ENCODE measurements at regions of chr4 and their contacts with region 1.

Region 1: GRCh38 chr4:183840311-183840710 is 64.8 kb upstream of the STOX2 start:
- DNase-seq: peak in 1 of 2 donors; percentile 77
- ATAC-seq: peak in 1 of 3 donors; percentile 60
- H3K4me3 ChIP-seq: no peak overlapping the region
- H3K4me3 Mint-ChIP-seq: no peak overlapping the region
- H3K27ac ChIP-seq: no peak overlapping the region
- H3K27ac Mint-ChIP-seq: no peak overlapping the region
- H3K4me1 ChIP-seq: no peaks in the 10 kb centered on the region
- H3K4me1 Mint-ChIP-seq: no peaks in the 10 kb centered on the region
- H3K27me3 ChIP-seq: no peaks in the 10 kb centered on the region
- H3K27me3 Mint-ChIP-seq: peaks cover 12 to 25% of the 10 kb centered on the region in 2 donors
- CTCF ChIP-seq: peak; percentile 60

Region 2: DNA sequence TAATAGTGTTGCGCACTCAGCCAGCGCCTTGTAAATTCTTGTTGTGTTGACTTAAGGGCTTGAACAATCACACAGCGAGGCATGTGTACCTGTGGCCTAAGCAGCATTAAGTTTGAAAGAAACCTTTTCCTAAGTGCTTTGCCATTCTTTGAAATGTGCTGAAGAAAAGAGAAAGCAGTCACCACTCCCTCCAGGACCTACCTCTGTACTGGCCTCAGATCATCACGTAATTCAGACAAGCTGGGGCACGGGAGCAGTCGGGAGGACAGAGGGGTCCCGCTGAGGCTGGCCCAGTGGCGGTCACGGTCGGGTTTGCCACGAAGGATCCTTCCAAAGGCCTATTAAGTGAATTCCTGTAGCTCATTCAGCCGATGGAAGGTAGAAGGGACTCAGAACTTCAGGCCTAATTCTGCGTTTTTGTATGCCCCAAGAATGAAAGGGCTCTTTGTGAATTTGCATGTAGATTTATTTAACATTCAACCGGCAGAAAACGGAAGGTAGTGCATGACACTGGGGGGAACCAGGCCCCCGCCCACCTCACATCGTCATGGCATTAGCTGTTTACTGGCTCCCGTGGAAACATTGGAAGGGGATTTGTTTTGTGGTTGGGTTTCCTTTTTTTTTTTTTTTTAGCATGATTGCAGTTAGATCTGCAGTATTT is 74.9 kb before region 1 on chr4:
- intact Hi-C with region 1: no loop called
- DNase-seq: no peak
- ATAC-seq: no peak
- H3K4me3 ChIP-seq: no peak overlapping the region
- H3K4me3 Mint-ChIP-seq: no peak overlapping the region
- H3K27ac ChIP-seq: no peak overlapping the region
- H3K27ac Mint-ChIP-seq: no peak overlapping the region
- H3K4me1 ChIP-seq: no peaks in the 10 kb centered on the region
- H3K4me1 Mint-ChIP-seq: no peaks in the 10 kb centered on the region
- H3K27me3 ChIP-seq: no peaks in the 10 kb centered on the region
- H3K27me3 Mint-ChIP-seq: peaks cover 0 to 12% of the 10 kb centered on the region in 2 donors
- CTCF ChIP-seq: no peak

Region 3: GRCh38 chr4:184250795-184251669 is 410.7 kb after region 1 on chr4:
- intact Hi-C with region 1: loop called (anchors 5 kb)
- DNase-seq: peak in 1 of 2 donors; percentile 80
- ATAC-seq: peak; percentile 66 to 84 (median 74)
- H3K4me3 ChIP-seq: no peak overlapping the region
- H3K4me3 Mint-ChIP-seq: no peak overlapping the region
- H3K27ac ChIP-seq: no peak overlapping the region
- H3K27ac Mint-ChIP-seq: no peak overlapping the region
- H3K4me1 ChIP-seq: no peaks in the 10 kb centered on the region
- H3K4me1 Mint-ChIP-seq: peaks cover 0 to 7% of the 10 kb centered on the region in 2 donors
- H3K27me3 ChIP-seq: no peaks in the 10 kb centered on the region
- H3K27me3 Mint-ChIP-seq: peaks cover 7 to 21% of the 10 kb centered on the region in 2 donors
- CTCF ChIP-seq: peak; percentile 71

Measured in natural killer cell (primary cell).